Common myeloid progenitor, CD34-positive (primary cell): ENCODE measurements at regions of chr2 and their contacts with region 1.

Region 1: GRCh38 chr2:26088032-26088643 is 54.3 kb downstream of the RAB10 start:
- DNase-seq: peak; percentile 44 to 55 (median 53)
- H3K4me3 ChIP-seq: no peak overlapping the region
- H3K27ac ChIP-seq: no peak overlapping the region
- H3K4me1 ChIP-seq: peaks cover 0 to 10% (median 8%) of the 10 kb centered on the region in 4 experiments
- H3K27me3 ChIP-seq: no peaks in the 10 kb centered on the region

Region 2: GRCh38 chr2:26072925-26073768 is 15.0 kb before region 1 on chr2:
- CTCF ChIA-PET with region 1: interaction called, 33 read pairs
- POLR2A ChIA-PET with region 1: interaction called, 3 read pairs
- DNase-seq: no peak
- H3K4me3 ChIP-seq: peak overlapping the region in 1 of 7 experiments; percentile 5
- H3K27ac ChIP-seq: no peak overlapping the region
- H3K4me1 ChIP-seq: peaks cover 4 to 39% (median 23%) of the 10 kb centered on the region in 4 experiments
- H3K27me3 ChIP-seq: no peaks in the 10 kb centered on the region

Region 3: DNA sequence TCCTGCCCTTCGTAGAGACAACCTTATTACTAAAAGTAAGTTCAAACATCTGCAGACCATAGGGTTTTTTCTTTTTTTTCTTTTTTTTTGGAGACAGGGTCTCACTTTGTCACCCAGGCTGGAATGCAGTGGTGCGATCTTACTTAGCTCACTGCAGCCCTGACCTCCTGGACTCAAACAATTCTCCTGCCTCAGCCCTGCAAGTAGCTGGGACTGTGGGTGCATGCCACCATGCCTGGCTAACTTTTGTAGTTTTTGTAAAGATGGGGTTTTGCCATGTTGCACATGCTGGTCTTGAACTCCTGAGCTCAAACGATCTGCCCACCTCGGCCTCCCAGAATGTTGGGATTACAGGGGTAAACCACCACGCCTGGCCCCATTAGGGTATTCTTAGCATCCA is 123.9 kb after region 1 on chr2:
- CTCF ChIA-PET with region 1: no interaction called
- POLR2A ChIA-PET with region 1: no interaction called
- DNase-seq: no peak
- H3K4me3 ChIP-seq: no peak overlapping the region
- H3K27ac ChIP-seq: no peak overlapping the region
- H3K4me1 ChIP-seq: no peaks in the 10 kb centered on the region
- H3K27me3 ChIP-seq: no peaks in the 10 kb centered on the region